Right ventricle myocardium superior (tissue), 1 donor: ENCODE measurements at regions of chr7 and their contacts with region 1.

Region 1: DNA sequence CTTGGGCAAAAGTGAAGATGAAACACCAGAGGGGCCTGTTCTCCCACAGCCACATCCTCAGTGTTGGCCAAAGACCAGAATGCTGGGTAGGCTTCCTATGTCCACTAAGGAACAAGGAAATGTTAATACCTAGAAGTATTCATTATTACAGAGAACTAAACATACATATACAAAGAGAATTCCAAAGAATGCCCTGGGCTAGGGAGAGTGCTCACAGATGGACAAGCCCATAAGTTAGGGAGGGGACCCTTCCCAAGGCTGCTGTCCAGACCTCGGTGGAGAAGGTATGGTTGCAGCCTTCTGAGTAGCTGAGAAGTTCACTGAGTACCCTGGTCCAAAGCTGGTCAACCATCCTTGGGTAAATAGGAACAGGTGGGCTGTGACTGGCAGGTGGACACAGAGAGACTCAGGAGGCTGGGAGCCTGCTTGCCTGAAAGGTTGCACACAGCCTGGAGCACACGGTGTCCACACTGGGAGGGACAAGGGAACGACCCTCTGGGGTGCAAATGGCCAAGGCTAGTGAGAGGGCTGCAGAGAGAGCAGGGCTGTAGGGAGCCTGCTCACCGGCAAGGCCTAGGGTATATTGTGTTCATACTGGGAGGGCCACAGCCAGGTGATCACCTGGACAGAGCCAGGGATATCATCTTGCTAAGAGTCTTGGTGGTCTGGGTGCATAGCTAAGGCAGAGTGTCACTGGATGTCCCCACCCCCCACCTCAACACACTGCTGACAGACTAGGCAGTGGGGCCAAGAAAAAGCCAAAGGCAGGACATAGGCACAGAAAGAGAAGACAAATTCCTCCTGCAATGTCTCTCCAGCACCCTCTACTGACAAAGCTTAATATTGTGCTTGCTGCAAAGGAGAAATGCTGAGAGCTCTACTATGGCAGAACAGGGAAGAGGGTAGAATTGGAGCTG is 40.3 kb downstream of the CPVL start:
- DNase-seq: no peak
- ATAC-seq: peak; percentile 83

Region 2: GRCh38 chr7:28921822-28922221 is 184.2 kb before region 1 on chr7:
- intact Hi-C with region 1: loop called (anchors 2 kb)
- DNase-seq: no peak
- ATAC-seq: peak; percentile 98

Region 3: DNA sequence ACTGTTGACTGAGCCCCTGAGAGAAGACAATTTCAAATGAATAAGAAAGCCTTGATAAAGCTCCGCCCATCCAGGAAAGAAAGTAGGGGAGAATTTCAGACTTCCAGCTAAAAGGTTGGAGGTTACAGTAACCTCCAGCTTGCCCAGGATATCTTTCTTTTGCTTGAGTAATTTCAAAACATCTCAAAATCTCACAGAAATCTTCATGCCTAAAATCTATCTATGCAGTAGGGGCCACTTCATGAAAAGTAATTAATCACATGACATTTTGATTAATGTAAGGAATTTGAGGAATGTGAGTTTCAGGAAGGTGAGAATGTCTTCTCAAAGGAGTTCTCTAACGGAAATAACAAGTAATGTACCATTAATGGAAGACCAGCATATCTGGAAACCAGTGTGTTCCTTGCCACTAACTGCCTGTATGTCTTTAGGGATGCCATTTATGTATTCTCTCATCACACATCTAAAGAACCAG is 172.1 kb before region 1 on chr7:
- intact Hi-C with region 1: no loop called
- DNase-seq: no peak
- ATAC-seq: no peak

Region 4: GRCh38 chr7:28955718-28956619 is 150.0 kb before region 1 on chr7:
- intact Hi-C with region 1: loop called (anchors 10 kb)
- DNase-seq: peak; percentile 87
- ATAC-seq: peak; percentile 70

Region 5: DNA sequence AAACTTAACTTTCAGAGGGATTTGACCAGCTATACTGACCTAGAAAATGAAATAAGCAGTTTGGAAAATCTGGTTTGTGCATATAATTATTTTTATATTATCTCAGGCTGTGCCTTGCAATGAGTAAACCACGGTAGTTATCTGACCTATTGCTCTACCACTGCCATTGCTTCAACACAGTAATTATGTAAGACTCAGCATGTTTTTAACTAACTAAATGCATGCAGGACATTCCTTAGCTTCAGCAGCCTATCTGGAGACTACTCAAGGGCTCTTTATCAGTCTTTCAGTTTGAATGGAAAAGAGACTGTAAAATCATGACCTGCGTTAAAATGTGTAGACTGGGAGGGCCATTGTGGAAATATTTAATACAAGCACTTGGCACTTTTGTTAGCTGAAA is 111.1 kb after region 1 on chr7:
- intact Hi-C with region 1: no loop called
- DNase-seq: no peak
- ATAC-seq: no peak

Region 6: DNA sequence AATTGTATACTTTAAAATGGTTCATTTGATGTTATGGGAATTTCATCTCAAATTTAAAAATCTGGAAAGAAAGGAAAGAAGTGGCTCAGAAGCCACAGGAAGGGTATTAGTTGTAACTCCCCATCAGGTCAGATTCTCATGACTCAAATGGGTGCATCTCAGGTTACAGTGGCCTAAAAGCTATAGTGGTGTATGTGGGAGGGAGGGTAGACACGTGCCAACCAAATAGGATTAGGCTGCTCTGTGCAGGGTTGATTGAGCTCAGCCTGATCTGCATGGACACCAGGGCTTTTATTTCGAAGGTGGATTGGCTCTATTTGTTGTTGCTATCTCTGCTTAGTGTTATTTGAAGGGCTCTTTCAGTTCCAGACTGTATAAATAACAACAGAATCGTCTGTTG is 336.1 kb after region 1 on chr7:
- intact Hi-C with region 1: no loop called
- DNase-seq: no peak
- ATAC-seq: peak; percentile 73